Dorsolateral prefrontal cortex (tissue), 120 donors: ENCODE measurements at regions of chr5 and their contacts with region 1.

Region 1: DNA sequence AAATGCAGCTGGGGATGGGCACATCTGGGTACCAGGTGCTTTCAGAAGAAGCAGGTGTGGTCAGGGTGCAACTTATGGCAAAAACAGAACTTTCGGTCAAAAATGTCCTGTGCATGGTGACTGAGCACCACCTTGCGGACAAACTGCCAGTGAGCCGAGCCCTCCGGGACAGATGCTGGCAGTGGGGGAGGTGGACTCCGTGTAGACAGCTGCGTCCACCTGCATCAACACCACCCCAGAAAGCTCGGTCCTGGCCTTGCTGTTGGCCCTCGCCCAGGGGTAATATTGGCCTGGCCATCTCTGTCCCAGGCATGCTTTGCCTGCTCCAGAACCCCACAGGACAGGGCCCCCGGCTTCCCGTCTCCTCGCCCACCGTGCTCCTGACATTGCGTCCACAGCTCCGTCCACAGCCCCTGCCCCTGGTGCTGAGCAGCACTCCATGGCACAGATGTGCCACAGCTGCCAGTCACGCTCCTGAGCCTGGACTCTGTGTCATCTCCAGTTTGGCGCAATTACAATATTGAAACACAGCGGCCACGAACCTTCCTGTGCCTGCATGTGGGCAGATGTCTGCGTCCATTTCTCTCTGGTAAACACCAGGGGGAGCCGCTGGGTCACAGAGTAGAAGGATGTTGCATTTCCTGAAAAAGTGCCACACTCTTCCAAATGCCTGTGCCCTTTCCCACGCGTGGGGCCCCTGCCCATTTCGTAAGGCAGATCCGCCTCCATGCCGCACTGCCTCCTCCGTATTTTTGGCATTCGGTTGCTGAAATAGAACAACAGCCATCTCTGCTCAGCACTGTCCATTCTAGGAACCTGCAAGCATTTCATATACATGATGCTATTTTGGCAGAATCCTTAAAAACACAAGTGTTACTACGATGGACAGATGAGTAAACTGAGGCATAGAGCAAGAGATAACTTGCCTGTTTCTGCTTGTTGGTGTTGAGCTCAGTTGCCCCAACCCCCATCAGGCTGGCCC is 33.4 kb upstream of the SLC6A19 start:
- DNase-seq: peak; percentile 54 to 82 (median 78)
- H3K4me3 ChIP-seq: peak overlapping the region in 49 of 59 donors; percentile 6 to 60 (median 33)
- H3K27ac ChIP-seq: no peak overlapping the region
- H3K27me3 ChIP-seq: peaks cover 0 to 6% (median 0%) of the 10 kb centered on the region in 45 donors
- CTCF ChIP-seq: peak; percentile 39 to 91 (median 78)

Region 2: DNA sequence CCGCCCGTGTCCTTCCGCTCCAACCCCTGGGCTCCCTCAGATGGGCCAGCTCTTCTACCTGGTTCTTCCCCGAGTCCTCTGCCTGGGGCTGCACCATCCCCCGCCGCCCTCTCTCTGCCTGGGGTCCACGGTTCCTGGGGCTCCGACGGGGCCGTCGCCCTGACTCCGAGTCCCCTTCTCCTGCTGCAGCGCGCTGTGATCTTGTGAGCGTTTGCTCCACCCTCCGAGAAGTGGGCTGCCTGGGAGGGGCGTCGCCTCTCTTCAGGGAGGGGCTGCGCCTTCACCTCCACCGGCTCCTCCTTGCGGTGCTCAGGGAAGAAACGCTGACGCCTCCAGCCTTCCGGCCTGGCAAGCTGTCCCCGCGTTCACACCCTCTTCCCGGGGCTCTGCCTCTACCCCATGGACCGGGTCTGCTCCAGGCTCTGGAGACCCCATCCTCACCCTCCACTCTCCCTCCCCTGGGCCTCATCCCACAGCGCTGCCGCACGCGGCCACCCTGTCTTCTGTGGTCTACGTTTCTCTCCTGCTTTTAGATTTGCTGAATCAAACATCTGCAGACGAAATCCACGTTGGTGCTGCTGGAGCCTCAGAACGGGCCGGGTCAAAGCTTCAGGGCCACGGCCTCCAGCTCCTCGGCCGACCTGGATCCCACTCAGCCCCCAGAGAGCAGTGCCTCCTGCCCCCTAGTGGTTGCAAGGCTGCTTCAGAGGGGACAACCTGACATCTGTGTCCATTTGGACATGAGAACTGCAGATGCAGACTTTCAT is 299.9 kb after region 1 on chr5:
- intact Hi-C with region 1: loop called in 1 of 2 experiments (anchors 10 kb)
- DNase-seq: peak in 8 of 10 donors; percentile 19 to 51 (median 36)
- H3K4me3 ChIP-seq: no peak overlapping the region
- H3K27ac ChIP-seq: no peak overlapping the region
- H3K27me3 ChIP-seq: no peaks in the 10 kb centered on the region
- CTCF ChIP-seq: peak; percentile 31 to 68 (median 60)